ENCODE measurements at regions of chr18 and their contacts with region 1.

Region 1: DNA sequence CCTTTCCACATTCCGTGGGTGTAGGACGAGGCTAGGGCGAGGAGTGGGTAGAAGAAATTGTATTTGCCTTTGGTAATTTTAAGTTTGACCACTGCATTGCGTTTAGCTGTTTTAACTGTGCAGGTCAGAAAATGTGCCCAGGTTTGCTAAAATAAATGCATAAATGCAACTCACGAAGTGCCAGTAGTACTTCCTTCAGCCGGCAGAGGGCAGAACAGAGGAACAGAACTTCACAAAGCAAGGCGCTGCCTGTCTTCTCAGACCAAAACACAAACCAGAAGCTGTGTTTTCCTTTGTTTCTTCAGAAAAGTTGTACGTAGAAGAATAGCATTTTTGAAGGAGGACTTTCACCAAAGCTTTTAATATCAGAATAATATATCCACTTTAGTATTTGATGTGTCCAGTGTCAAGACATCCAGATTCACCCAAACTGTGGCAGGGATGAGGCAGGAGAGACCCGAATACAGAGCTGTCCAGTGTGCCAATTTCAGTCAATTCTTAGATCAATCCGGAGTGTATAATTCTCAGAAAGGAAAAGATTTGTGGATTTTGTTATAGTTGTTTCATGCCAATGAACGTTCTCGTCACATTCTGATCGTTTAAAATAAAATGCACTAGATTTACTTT is 348.6 kb downstream of the DLGAP1 start:
- DNase-seq: peak; percentile 80
- ATAC-seq: peak; percentile 64
- H3K4me3 Mint-ChIP-seq: no peak overlapping the region
- H3K27ac Mint-ChIP-seq: no peak overlapping the region
- H3K4me1 Mint-ChIP-seq: no peaks in the 10 kb centered on the region
- H3K27me3 Mint-ChIP-seq: no peaks in the 10 kb centered on the region
- CTCF ChIP-seq: peak; percentile 87

Region 2: DNA sequence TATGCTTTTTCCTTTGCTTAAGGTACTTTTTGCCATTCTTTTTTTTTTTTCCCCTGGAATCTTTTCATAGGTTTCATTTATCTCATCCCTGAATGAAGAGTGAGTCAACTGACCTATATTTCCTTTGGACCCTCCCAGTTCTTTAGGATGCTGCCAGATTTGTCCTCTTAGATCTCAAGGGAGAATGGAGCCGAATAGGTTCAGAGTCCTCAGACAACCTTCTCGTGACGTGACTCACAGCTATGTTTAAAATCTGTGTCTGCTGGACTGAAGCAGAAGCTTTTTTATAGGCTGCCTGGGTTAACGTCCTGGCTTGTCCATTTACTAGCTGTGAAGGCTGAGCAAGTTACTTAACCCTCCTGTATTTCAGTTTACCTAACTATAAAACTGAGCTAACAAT is 10.0 kb before region 1 on chr18:
- CTCF ChIA-PET with region 1: interaction called, 19 read pairs
- POLR2A ChIA-PET with region 1: no interaction called
- intact Hi-C with region 1: no loop called
- DNase-seq: no peak
- ATAC-seq: no peak
- H3K4me3 Mint-ChIP-seq: no peak overlapping the region
- H3K27ac Mint-ChIP-seq: no peak overlapping the region
- H3K4me1 Mint-ChIP-seq: no peaks in the 10 kb centered on the region
- H3K27me3 Mint-ChIP-seq: peaks cover 5% of the 10 kb centered on the region
- CTCF ChIP-seq: no peak

Region 3: DNA sequence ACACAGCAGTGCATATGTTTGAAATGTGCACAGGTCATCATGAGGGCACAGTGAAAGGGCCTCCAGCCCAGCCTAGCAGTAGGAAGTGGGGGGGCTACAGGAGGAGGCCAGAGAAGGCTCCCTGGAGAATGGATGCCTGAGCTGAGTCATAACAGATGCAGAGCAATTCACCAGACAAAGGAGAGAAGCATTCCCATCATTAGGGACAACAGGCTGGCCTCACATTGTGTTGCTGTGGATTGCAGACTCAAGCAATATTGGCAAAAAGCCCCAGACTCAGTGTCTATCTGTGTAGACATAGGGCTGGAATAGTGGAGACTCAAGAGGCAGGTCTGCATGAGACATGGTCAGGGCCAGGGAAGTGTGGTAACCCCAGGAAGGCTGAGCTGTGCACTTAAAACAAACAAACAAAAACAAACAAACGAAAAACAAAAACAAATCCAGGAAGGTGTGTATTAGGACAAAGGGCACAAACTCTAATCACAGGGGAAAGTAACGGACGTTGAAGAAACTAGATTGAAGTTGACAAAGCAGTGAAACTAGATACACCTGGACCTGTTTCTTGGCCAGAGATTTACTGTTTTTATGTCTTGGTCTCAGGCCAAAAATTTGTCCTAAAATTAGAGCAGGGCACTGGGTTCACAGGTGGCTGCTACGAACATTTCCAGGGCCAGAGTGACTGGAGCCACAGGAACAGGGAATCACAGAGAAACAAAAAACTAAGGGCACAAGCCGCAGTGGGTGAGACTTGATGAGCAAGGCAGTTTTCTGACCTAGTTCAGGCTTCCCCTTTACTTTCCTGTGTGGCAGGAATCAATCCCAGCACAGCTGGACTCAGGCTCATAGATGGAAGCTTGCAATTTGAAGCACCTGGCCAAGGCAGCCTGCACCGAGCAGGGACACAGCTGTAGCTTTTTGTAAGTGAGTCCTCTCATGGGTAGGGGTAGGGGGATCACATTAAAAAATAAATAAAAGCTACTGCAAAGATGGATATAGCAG is 19.0 kb after region 1 on chr18:
- CTCF ChIA-PET with region 1: interaction called, 11 read pairs
- POLR2A ChIA-PET with region 1: no interaction called
- intact Hi-C with region 1: no loop called
- DNase-seq: no peak
- ATAC-seq: no peak
- H3K4me3 Mint-ChIP-seq: no peak overlapping the region
- H3K27ac Mint-ChIP-seq: no peak overlapping the region
- H3K4me1 Mint-ChIP-seq: no peaks in the 10 kb centered on the region
- H3K27me3 Mint-ChIP-seq: peaks cover 1% of the 10 kb centered on the region
- CTCF ChIP-seq: no peak

Region 4: GRCh38 chr18:4172196-4173100 is 65.9 kb after region 1 on chr18:
- CTCF ChIA-PET with region 1: no interaction called
- POLR2A ChIA-PET with region 1: no interaction called
- intact Hi-C with region 1: no loop called
- DNase-seq: no peak
- ATAC-seq: no peak
- H3K4me3 Mint-ChIP-seq: no peak overlapping the region
- H3K27ac Mint-ChIP-seq: no peak overlapping the region
- H3K4me1 Mint-ChIP-seq: no peaks in the 10 kb centered on the region
- H3K27me3 Mint-ChIP-seq: no peaks in the 10 kb centered on the region
- CTCF ChIP-seq: no peak

Region 5: GRCh38 chr18:5021558-5021957 is 915.0 kb after region 1 on chr18:
- CTCF ChIA-PET with region 1: interaction called, 10 read pairs
- POLR2A ChIA-PET with region 1: no interaction called
- intact Hi-C with region 1: no loop called
- DNase-seq: no peak
- ATAC-seq: no peak
- H3K4me3 Mint-ChIP-seq: no peak overlapping the region
- H3K27ac Mint-ChIP-seq: no peak overlapping the region
- H3K4me1 Mint-ChIP-seq: no peaks in the 10 kb centered on the region
- H3K27me3 Mint-ChIP-seq: no peaks in the 10 kb centered on the region
- CTCF ChIP-seq: no peak

Region 6: DNA sequence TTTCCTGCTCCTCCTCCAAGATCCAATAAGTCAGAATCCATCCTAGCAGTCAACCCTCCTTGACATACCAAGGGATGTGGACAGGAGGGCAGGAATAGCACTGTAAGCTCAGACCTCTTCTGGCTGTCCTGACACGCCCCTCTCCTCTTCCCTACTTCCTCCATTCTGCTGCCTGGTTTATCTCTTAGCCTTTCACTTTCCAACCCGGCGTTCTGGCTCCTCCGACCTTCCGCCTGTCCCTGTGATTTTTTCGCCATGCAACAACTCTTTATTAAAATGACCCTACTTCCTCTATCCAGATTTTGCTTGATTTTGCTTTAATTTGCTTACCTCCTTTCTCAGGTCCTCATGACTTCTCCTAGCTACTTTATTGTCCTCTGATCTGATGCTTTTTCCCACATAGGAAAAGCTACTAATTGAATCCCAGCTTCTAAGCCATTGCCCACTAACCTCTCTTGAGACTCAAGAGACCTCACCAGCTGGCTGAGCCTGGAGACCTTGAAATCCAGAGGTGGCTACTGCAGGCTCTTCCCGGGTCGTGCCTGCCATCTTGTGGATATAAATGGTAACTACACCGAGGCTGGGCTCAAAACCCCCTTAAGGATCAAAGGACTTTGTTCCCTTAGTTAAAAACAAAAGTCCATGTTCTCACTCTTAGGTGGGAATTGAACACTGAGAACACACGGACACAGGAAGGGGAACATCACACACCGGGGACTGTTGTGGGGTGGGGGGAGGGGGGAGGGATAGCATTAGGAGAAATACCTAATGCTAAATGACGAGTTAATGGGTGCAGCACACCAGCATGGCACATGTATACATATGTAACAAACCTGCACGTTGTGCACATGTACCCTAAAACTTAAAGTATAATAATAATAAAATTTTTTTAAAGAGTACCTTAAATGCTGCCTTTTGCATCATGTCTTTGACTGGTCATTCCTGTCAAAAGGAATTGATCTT is 951.1 kb after region 1 on chr18:
- CTCF ChIA-PET with region 1: interaction called, 49 read pairs
- POLR2A ChIA-PET with region 1: no interaction called
- intact Hi-C with region 1: no loop called
- DNase-seq: peak; percentile 68
- ATAC-seq: peak; percentile 78
- H3K4me3 Mint-ChIP-seq: no peak overlapping the region
- H3K27ac Mint-ChIP-seq: no peak overlapping the region
- H3K4me1 Mint-ChIP-seq: peaks cover 19% of the 10 kb centered on the region
- H3K27me3 Mint-ChIP-seq: peaks cover 2% of the 10 kb centered on the region
- CTCF ChIP-seq: peak; percentile 77

Measured in activated CD8-positive, alpha-beta T cell treated with anti-CD3 and anti-CD28 coated beads for 36 hours (primary cell).